Activated CD4-positive, alpha-beta T cell treated with anti-CD3 and anti-CD28 coated beads, Interleukin-2, amount 10 ng/mL, durations not matched to agents 24 days and 14 days (primary cell): ENCODE measurements at regions of chr4 and their contacts with region 1.

Region 1: DNA sequence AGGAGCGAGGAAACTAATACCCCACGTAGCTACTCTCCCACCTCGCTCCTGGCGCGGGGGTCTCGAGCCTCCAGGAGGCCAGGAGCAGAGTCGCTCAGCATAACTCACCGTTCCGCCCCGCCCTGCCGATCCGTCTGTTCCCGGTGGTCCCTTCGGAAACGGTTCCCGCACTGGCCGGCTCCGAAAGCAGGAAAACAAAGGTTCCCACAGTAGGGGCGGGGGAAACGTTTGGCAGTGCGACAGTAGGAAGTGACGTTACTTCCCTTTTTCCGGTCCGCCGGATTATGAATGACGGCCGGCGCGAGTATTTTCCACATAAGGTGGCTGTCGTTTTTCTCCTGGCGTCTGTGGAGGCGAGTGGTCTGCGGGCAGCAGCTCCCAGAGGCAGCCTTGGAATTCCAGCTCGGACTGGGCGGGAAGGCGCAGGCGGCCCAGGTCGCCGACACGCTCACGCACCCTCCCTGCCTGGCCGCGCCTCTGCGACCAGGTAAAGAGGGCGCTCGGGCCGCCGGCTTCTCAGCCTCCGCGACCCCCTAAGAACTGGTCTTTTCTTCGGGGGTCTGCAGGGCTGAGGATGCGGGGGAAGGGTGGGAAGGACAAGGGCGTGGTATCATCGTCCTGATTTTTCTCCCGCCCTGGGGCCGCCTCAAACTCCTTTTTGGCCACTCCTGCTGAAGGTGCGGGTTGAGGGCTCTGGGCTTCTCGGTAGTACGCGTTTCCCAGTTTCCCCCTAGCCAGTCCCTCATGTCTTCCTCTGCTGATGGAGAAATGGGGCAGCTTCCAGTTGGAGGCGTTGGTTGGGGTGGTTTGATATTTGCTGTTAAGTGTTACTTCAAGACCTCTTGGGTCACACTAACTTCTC is at the starts of genes GSTCD and INTS12:
- DNase-seq: peak; percentile 96
- H3K4me3 Mint-ChIP-seq: peak within 1 kb of the TSS; percentile 99
- H3K27ac Mint-ChIP-seq: peak within 1 kb of the TSS; percentile 94
- H3K4me1 Mint-ChIP-seq: peaks cover 15% of the 10 kb centered on the region
- H3K27me3 Mint-ChIP-seq: no peaks in the 10 kb centered on the region
- total RNA-seq, gene GSTCD: 17.5 and 22.0 TPM in 2 replicates
- total RNA-seq, gene INTS12: 23.6 and 24.4 TPM in 2 replicates

Region 2: DNA sequence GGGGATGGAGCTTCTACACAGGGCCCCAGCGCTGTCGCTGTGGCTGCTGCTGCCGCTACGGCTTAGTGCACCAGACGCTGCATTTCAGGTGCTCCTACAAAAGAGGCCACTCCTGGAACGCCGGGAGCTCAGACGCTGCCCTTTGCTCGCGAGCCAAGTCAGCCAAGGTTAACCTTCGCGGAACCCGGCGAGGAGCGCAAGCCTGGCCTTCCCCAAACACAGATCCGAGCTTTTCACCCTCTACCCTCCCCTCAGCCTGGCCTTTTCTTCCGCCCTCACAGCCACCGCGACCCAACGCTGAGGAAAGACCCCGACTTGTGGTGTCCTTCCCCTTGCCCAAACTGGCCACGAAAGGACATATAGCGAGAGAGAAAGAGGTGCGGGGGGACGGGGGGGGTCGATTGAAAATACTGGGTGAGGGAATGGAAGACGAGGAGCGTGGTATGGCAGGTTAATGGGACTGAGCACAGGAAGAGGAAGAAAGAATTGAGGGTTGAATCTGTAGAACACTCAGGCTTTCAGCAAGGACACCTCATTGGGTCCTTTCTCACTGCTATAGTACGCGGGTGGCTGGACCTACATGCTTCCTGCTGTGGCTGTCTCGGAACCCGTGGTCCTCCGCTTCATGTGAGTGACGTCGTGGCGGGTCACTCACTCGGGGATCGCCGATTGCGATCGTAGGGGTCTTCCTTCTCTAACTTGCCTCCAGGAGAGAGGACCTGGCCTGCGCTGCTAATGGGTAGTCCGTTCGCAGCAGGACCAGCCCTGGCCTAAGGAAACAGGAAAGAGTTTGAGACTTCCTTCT is 607.4 kb after region 1 on chr4 and contains the starts of genes AIMP1 and TBCK:
- intact Hi-C with region 1: loop called (anchors 5 kb)
- DNase-seq: peak; percentile 96
- H3K4me3 Mint-ChIP-seq: no peak within 1 kb of the TSS
- H3K27ac Mint-ChIP-seq: peak within 1 kb of the TSS; percentile 87
- H3K4me1 Mint-ChIP-seq: peaks cover 23% of the 10 kb centered on the region
- H3K27me3 Mint-ChIP-seq: no peaks in the 10 kb centered on the region
- total RNA-seq, gene AIMP1: 82.6 and 84.7 TPM in 2 replicates
- total RNA-seq, gene TBCK: 28.1 and 29.5 TPM in 2 replicates